MCF 10A (cell line): ENCODE measurements at regions of chr5 and their contacts with region 1.

Region 1: GRCh38 chr5:66171349-66172344 is 27.5 kb downstream of the SREK1 start:
- DNase-seq: peak; percentile 49
- H3K4me3 Mint-ChIP-seq: no peak overlapping the region
- H3K27ac Mint-ChIP-seq: peak overlapping the region; percentile 6
- H3K4me1 Mint-ChIP-seq: peaks cover 13% of the 10 kb centered on the region
- H3K27me3 Mint-ChIP-seq: no peaks in the 10 kb centered on the region
- CTCF ChIP-seq: peak; percentile 43

Region 2: GRCh38 chr5:65742565-65743231 is 428.9 kb before region 1 on chr5:
- CTCF ChIA-PET with region 1: no interaction called
- POLR2A ChIA-PET with region 1: no interaction called
- intact Hi-C with region 1: loop called (anchors 2 kb)
- DNase-seq: peak; percentile 72
- H3K4me3 Mint-ChIP-seq: no peak overlapping the region
- H3K27ac Mint-ChIP-seq: no peak overlapping the region
- H3K4me1 Mint-ChIP-seq: peaks cover 18% of the 10 kb centered on the region
- H3K27me3 Mint-ChIP-seq: no peaks in the 10 kb centered on the region
- CTCF ChIP-seq: peak; percentile 65

Region 3: GRCh38 chr5:66209350-66209749 is 37.7 kb after region 1 on chr5:
- CTCF ChIA-PET with region 1: interaction called, 5 read pairs
- POLR2A ChIA-PET with region 1: interaction called, 4 read pairs
- intact Hi-C with region 1: loop called (anchors 2 kb)
- DNase-seq: peak; percentile 82
- H3K4me3 Mint-ChIP-seq: peak overlapping the region; percentile 24
- H3K27ac Mint-ChIP-seq: peak overlapping the region; percentile 74
- H3K4me1 Mint-ChIP-seq: peaks cover 23% of the 10 kb centered on the region
- H3K27me3 Mint-ChIP-seq: no peaks in the 10 kb centered on the region
- CTCF ChIP-seq: peak; percentile 12

Region 4: GRCh38 chr5:66223636-66224035 is 52.0 kb after region 1 on chr5:
- CTCF ChIA-PET with region 1: no interaction called
- POLR2A ChIA-PET with region 1: no interaction called
- intact Hi-C with region 1: loop called (anchors 5 kb)
- DNase-seq: peak; percentile 48
- H3K4me3 Mint-ChIP-seq: no peak overlapping the region
- H3K27ac Mint-ChIP-seq: no peak overlapping the region
- H3K4me1 Mint-ChIP-seq: no peaks in the 10 kb centered on the region
- H3K27me3 Mint-ChIP-seq: no peaks in the 10 kb centered on the region
- CTCF ChIP-seq: peak; percentile 23

Region 5: DNA sequence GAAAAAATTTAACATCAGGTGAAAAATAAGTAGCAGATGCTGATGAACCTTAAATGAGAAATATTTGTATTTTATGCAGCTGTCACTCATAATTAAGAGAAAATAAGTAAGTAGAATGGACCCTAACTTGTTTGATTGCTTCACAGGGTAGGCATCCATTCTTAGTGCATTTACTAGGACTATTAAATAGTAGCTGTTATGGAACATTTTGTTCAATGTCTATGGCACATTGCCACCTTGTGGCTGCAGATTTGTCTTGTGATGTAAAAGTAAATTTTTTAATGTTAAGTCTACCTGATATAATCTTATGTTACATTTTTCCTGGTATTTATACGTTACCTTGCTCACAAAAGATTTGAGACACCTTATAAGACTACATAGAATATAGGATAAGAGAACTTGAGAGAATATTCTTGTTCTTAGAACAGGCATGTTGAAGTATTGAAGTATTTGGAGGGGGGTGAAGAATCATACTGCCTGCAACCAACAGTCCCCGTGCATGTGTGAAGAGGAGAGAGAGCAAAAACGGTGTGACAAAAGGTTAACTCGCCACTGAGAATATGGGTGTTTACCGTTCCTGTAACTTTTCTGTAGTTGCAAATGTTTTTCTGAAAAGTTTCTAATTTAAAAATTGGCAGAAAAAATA is 585.7 kb after region 1 on chr5:
- CTCF ChIA-PET with region 1: interaction called, 3 read pairs
- POLR2A ChIA-PET with region 1: no interaction called
- intact Hi-C with region 1: loop called (anchors 10 kb)
- DNase-seq: peak; percentile 68
- H3K4me3 Mint-ChIP-seq: no peak overlapping the region
- H3K27ac Mint-ChIP-seq: no peak overlapping the region
- H3K4me1 Mint-ChIP-seq: no peaks in the 10 kb centered on the region
- H3K27me3 Mint-ChIP-seq: peaks cover 69% of the 10 kb centered on the region
- CTCF ChIP-seq: peak; percentile 49